ENCODE measurements at regions of chr1 and their contacts with region 1.

Region 1: GRCh38 chr1:43073490-43074230 is 98.4 kb downstream of the EBNA1BP2 start:
- DNase-seq: no peak
- H3K4me3 ChIP-seq: no peak overlapping the region
- H3K27me3 ChIP-seq: no peaks in the 10 kb centered on the region
- CTCF ChIP-seq: peak; percentile 73

Region 2: DNA sequence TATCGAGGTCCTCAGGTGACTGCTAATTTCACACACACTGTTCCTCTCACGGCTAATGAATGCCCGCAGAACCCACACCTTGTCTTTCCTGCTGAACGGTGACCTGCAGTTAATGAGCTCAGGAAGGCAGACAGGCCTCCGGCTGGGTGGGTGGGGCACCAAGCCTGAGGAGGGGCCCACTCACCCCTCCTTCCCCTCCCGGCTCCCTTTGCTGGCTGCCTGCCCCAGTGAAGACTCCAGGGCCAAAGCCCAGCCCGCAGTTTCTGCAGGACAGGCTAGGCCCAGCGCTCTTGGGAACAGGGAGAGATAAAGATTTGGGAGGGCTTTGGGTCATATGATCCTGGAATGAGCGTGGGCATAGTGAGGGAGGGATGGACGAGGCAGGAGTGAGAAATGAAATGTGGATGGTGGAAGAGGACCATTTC is 1686.0 kb before region 1 on chr1:
- CTCF ChIA-PET with region 1: no interaction called
- POLR2A ChIA-PET with region 1: no interaction called
- DNase-seq: peak; percentile 18
- H3K4me3 ChIP-seq: no peak overlapping the region
- H3K27me3 ChIP-seq: peaks cover 44% of the 10 kb centered on the region
- CTCF ChIP-seq: no peak

Region 3: DNA sequence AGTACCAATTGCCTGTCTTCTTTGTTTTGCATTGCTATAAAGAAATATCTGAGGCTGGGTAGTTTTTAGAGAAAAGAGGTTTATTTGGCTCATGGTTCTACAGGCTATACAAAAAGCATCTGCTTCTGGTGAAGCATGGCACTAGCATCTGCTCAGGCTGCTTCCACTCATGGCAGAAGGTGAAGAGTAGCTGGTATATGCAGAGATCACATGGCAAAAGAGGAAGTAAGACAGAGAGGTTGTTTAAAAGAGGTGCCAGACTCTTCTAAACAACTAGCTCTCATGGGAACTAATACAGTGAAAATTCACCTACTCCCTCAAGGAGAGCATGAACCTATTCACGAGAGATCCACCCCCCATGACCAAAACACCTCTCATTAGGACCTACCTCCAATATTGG is 977.1 kb before region 1 on chr1:
- CTCF ChIA-PET with region 1: no interaction called
- POLR2A ChIA-PET with region 1: no interaction called
- DNase-seq: no peak
- H3K4me3 ChIP-seq: no peak overlapping the region
- H3K27me3 ChIP-seq: no peaks in the 10 kb centered on the region
- CTCF ChIP-seq: no peak

Region 4: GRCh38 chr1:42784547-42784945 is 289.1 kb before region 1 on chr1:
- CTCF ChIA-PET with region 1: interaction called, 82 read pairs
- POLR2A ChIA-PET with region 1: no interaction called
- DNase-seq: no peak
- H3K4me3 ChIP-seq: no peak overlapping the region
- H3K27me3 ChIP-seq: no peaks in the 10 kb centered on the region
- CTCF ChIP-seq: no peak

Region 5: DNA sequence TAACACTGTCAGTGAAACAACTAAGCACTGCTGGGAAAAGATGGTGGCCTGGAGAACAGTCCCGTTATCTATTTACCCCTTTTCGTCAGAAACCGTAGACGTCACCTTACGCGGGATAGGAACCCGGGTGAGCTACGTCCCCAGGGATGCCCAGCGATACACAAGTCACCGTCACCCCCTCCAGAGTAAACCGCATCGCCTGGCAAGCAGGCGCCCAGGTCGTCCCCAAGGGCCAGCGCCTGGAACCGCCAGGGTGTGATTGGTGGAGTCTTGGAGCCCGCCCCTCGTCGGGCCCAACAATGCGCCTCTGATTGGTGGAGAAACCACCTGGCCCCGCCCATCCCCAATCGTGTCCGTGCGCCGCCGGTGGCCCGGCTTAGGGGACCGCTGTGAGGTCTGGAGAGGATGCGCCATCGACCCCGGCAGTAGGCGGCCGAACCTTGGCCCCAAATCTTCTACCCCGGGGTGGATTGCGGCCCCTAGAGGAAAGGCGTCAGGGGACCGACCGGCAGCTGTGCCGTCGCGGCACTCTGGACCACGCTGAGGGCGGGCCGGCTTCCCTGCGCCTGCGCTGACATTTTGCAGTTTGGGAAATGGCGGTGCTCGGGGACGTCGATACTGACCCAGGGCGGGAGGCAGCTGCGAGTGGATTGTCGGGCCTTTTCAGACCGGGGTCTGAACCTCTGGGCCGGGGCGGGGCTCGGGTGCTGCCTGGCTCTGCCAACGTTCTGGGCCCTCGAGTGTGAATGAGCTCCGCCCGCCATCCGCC is 149.4 kb before region 1 on chr1:
- CTCF ChIA-PET with region 1: interaction called, 474 read pairs
- POLR2A ChIA-PET with region 1: no interaction called
- DNase-seq: peak; percentile 44
- H3K4me3 ChIP-seq: peak overlapping the region; percentile 51
- H3K27me3 ChIP-seq: no peaks in the 10 kb centered on the region
- CTCF ChIP-seq: peak; percentile 31

Region 6: GRCh38 chr1:42936309-42937078 is 137.2 kb before region 1 on chr1:
- CTCF ChIA-PET with region 1: interaction called, 24 read pairs
- POLR2A ChIA-PET with region 1: interaction called, 6 read pairs
- DNase-seq: peak; percentile 69
- H3K4me3 ChIP-seq: no peak overlapping the region
- H3K27me3 ChIP-seq: no peaks in the 10 kb centered on the region
- CTCF ChIP-seq: no peak

Region 7: DNA sequence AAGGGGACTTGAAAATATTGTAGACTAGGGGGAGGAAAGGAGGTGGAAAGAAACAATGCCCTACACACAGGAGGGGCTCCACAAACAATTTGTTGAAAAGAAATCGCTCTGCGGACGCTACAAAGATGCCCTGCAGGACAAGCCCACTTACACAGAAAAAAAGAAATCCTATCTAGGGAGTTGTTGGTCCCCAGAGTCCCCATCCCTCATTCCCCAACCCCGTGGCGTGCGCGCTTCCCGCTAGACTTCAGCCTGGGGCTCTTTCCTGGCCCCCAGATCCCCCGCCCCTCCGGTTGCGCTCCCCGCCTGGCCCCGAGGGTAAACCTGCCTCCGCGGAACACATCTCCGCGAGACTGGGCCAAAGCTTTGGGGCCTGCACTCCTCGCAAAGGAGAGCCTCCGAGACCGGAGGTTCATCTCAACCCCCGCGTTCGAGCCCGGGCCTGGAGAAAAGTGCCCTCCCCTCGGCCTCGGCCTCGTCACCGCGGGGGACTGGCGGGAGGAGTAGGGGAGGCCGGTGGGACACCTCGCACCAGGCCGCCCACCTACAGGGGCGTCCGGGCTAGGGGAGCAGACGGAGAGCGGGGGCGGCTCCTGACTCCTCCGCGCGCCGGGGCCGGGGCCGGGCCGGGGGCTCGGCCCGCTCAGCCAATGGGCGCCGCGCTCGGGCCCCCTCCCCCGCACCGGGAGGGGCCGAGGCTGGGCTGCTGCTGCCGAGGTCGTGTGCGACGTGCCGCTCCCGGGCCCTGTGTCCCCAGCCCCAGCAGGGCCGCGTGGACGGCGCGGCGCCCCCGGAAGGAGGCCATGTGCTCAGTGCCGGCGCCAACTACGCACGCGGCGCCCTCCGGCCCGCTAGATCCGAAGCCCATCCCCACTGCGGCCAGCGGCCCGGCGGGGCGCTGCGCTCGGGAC is 115.8 kb before region 1 on chr1:
- CTCF ChIA-PET with region 1: interaction called, 20 read pairs
- POLR2A ChIA-PET with region 1: interaction called, 8 read pairs
- DNase-seq: no peak
- H3K4me3 ChIP-seq: peak overlapping the region; percentile 87
- H3K27me3 ChIP-seq: no peaks in the 10 kb centered on the region
- CTCF ChIP-seq: no peak

Region 8: GRCh38 chr1:42999308-42999707 is 74.4 kb before region 1 on chr1:
- CTCF ChIA-PET with region 1: interaction called, 11 read pairs
- POLR2A ChIA-PET with region 1: no interaction called
- DNase-seq: peak; percentile 18
- H3K4me3 ChIP-seq: no peak overlapping the region
- H3K27me3 ChIP-seq: no peaks in the 10 kb centered on the region; the same call in 1 of the 2 replicates
- CTCF ChIP-seq: no peak